H1 (cell line): ENCODE measurements at regions of chr17 and their contacts with region 1.

Region 1: DNA sequence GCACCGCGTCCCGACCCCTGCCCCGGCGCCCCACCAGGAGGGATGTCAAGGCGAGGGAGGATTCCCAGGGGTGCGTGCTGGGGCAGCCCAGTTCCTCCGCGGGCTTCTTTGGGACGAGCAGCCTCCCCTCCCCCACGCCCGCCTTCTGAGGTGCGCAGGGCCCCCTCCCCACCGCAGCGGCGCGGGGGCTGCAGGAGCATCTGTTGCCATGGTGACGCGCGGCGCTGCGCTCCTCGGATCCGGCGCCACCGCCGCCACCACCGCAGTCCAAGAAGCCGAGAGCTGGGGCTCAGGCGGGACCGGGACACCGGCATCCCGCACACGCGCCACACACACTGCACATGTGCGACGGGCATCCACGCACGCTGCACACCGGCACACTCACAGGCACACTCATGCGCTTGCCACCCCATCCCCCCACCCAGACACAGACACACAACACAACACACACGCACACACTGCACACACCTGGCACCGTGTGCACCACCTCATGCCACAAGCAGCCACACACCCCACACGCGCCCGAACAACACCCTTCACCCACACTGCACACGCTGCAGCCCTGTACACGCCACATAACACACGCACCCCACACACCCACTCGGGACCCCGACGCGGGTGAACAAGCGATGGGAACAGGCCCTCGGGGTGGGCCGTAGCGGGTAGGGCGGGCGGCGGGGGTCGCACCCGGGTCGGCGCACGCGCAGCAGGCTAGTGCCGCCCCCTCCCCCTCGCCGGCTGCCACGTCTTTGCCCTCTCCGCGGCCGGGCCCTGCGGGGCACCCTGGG is 17.0 kb downstream of the ENPP7 start:
- DNase-seq: no peak
- H3K4me3 ChIP-seq: peak overlapping the region; percentile 17 to 62 (median 36)
- H3K27ac ChIP-seq: no peak overlapping the region
- H3K4me1 ChIP-seq: peaks cover 4 to 24% (median 15%) of the 10 kb centered on the region in 4 experiments
- H3K27me3 ChIP-seq: peaks cover 19 to 47% (median 35%) of the 10 kb centered on the region in 4 experiments
- CTCF ChIP-seq: no peak
- EP300 ChIP-seq: no peak
- POLR2A ChIP-seq: no peak
- RAD21 ChIP-seq: no peak

Region 2: DNA sequence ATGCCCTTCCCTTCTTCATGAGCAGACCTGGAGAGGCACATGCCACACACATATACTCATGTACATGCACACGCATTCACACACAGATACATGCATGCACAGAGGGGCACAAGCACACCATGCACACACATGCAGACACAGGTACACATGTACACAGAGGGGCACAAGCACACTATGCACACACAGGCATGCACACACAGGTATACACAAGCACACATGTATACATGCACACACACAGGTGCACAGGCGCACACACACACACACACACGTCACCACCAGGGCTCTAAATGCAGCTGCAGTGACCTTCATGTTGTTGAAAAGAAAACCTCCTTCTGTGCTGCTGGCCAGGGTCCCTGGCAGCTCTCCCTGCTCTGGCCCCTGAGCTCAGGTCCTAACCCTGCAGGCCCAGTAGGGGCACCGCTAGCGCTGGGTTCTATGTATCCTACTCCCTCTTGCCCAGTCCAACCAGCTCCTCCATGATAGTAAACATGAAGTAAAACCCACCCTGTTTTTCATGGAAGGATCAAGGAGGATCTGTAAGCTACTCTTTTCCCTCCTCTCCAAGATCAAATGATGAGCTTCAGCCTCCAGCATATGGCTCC is 309.7 kb before region 1 on chr17:
- CTCF ChIA-PET with region 1: no interaction called
- POLR2A ChIA-PET with region 1: no interaction called
- DNase-seq: no peak
- H3K4me3 ChIP-seq: no peak overlapping the region
- H3K27ac ChIP-seq: no peak overlapping the region
- H3K4me1 ChIP-seq: no peaks in the 10 kb centered on the region; a peak in 1 of 7 replicates
- H3K27me3 ChIP-seq: no peaks in the 10 kb centered on the region
- CTCF ChIP-seq: peak in 2 of 3 experiments; percentile 27 to 36; a peak in 2 of 4 replicates
- EP300 ChIP-seq: no peak
- POLR2A ChIP-seq: no peak
- RAD21 ChIP-seq: peak; percentile 5 to 32; a peak in 2 of 4 replicates

Region 3: GRCh38 chr17:79622122-79622807 is 125.4 kb before region 1 on chr17:
- CTCF ChIA-PET with region 1: no interaction called
- POLR2A ChIA-PET with region 1: no interaction called
- DNase-seq: peak in 1 of 2 experiments; percentile 39
- H3K4me3 ChIP-seq: no peak overlapping the region
- H3K27ac ChIP-seq: no peak overlapping the region
- H3K4me1 ChIP-seq: peaks cover 0 to 10% (median 5%) of the 10 kb centered on the region in 4 experiments; a peak in 5 of 7 replicates
- H3K27me3 ChIP-seq: peaks cover 0 to 6% (median 0%) of the 10 kb centered on the region in 4 experiments; a peak in 1 of 7 replicates
- CTCF ChIP-seq: no peak
- EP300 ChIP-seq: no peak
- POLR2A ChIP-seq: no peak
- RAD21 ChIP-seq: no peak

Region 4: DNA sequence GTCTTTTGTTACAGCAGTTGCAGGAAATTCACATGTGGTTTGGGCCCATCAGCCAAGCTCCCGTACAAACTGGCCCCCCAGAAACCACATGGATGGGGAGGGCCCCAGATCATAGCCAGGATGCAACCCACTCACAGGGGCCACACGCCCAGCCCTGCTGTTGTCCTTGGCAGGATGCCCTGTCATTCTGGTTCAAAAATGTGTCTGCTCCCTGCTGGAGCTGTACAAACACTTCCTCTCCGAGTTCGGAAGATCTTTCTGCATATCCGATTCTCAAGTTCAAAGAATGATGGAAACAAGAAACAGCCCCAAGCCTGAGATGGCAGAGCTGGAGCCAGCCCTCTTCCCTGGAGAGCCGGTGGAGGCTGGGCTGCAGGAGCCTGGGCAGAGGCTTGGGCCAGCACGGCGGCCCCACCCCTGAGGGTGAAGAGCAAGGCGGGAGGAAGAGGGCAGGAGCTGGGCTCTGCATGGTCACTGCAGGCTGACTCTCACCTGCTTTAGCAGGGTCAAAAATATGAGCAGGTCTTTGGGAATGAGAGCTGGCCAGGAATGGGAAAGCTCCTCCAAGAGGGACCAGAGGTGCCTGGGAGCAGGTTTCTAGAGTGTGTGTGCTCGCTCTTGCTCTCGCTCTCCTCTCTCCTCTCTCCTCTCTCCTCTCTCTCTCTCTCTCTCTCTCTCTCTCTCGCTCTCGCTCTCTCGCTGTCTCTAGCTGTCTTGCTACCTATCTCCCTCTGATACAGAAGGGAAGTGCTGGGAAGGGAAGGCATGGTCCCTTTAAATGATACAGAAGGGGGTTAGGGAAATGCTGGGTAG is 51.7 kb before region 1 on chr17:
- CTCF ChIA-PET with region 1: no interaction called
- POLR2A ChIA-PET with region 1: no interaction called
- DNase-seq: no peak
- H3K4me3 ChIP-seq: no peak overlapping the region
- H3K27ac ChIP-seq: no peak overlapping the region
- H3K4me1 ChIP-seq: peaks cover 3 to 33% (median 20%) of the 10 kb centered on the region in 4 experiments
- H3K27me3 ChIP-seq: peaks cover 0 to 7% (median 0%) of the 10 kb centered on the region in 4 experiments; a peak in 3 of 7 replicates
- CTCF ChIP-seq: no peak
- EP300 ChIP-seq: no peak
- POLR2A ChIP-seq: no peak
- RAD21 ChIP-seq: no peak

Region 5: DNA sequence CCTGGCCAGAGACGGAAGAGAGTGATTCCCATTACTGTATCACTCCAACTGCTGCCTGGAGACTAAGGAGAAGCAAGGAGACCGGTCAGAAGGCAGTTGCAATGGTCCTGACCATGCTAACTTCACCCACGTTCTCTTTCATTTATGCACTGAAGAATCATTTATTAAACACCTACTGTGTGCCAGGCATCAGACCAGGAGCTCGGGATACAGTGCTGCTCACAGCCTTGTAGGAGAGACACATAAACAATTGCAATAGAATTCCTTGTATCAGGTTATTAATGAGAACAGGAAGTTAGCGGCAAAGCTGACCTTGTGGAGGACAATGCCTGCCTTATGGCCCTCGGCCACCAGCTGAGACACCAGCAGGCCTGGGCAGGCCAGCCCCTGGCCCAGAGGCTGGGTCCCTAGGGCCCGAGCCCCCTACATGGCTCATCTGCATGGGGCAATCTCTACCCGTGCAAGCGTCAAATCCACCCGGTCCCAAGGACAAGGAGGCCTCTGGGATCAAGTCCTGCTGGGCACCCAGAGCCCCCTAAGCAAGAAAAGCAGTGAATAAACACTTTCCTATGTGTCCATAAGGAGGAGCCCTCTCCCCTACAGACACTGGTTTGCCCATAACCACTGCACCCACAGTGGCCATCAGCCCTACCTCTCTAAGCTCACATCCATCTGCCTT is 25.6 kb before region 1 on chr17:
- CTCF ChIA-PET with region 1: interaction called, 22 read pairs
- POLR2A ChIA-PET with region 1: no interaction called
- DNase-seq: no peak
- H3K4me3 ChIP-seq: no peak overlapping the region
- H3K27ac ChIP-seq: no peak overlapping the region
- H3K4me1 ChIP-seq: peaks cover 0 to 3% (median under 1%) of the 10 kb centered on the region in 4 experiments; a peak in 1 of 7 replicates
- H3K27me3 ChIP-seq: no peaks in the 10 kb centered on the region; a peak in 1 of 7 replicates
- CTCF ChIP-seq: peak; percentile 66 to 77 (median 71)
- EP300 ChIP-seq: no peak
- POLR2A ChIP-seq: no peak
- RAD21 ChIP-seq: peak; percentile 72 to 81

Region 6: DNA sequence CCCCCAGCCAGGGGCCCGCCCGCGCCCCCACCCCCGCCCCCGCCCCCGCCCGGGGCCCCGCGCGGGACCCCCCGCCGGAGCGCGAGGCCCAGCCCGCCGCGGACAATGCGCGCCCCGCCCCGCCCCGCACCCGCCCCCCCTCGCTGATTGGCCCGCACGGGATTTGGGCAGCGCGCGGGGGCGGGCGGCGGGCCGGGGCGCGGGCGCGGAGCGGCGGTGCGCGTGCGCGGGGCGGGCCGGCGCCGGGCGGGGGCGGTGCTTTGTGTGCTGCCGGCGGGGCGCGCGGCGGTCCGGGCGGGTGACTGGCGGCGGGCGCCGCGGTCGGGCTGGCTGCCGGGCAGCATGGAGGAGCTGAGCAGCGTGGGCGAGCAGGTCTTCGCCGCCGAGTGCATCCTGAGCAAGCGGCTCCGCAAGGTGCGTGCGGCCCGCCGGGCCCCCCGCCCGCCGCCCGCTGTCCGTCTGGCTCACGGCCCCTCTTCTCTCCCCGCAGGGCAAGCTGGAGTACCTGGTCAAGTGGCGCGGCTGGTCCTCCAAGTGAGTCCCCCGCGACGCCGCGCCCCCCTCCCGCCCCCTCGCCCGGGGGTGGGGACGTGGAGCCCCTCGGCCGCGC is 30.3 kb after region 1 on chr17 and contains the start of gene CBX2:
- CTCF ChIA-PET with region 1: interaction called, 90 read pairs
- POLR2A ChIA-PET with region 1: interaction called, 77 read pairs
- DNase-seq: peak in 1 of 2 experiments; percentile 85
- H3K4me3 ChIP-seq: peak within 1 kb of the TSS; percentile 57 to 97 (median 83)
- H3K27ac ChIP-seq: peak within 1 kb of the TSS; percentile 85
- H3K4me1 ChIP-seq: peaks cover 4 to 19% (median 15%) of the 10 kb centered on the region in 4 experiments
- H3K27me3 ChIP-seq: no peaks in the 10 kb centered on the region; a peak in 1 of 7 replicates
- CTCF ChIP-seq: no peak
- EP300 ChIP-seq: no peak
- POLR2A ChIP-seq: peak; percentile 63 to 85
- RAD21 ChIP-seq: no peak
- total RNA-seq, gene CBX2: 83.9 and 85.9 TPM in 2 replicates

Region 7: GRCh38 chr17:79796763-79797491 is 49.2 kb after region 1 on chr17 and contains the start of gene CBX8:
- CTCF ChIA-PET with region 1: interaction called, 94 read pairs
- POLR2A ChIA-PET with region 1: interaction called, 7 read pairs
- DNase-seq: peak; percentile 99 to 100
- H3K4me3 ChIP-seq: peak within 1 kb of the TSS; percentile 44 to 67 (median 53)
- H3K27ac ChIP-seq: peak within 1 kb of the TSS; percentile 66; the same call in 1 of the 2 replicates
- H3K4me1 ChIP-seq: peaks cover 8 to 58% (median 38%) of the 10 kb centered on the region in 4 experiments
- H3K27me3 ChIP-seq: peaks cover 80 to 92% (median 90%) of the 10 kb centered on the region in 4 experiments
- CTCF ChIP-seq: no peak
- EP300 ChIP-seq: peak in 1 of 2 experiments; percentile 59; a peak in 1 of 3 replicates
- POLR2A ChIP-seq: peak in 1 of 2 experiments; percentile 43; a peak in 1 of 3 replicates
- RAD21 ChIP-seq: no peak
- total RNA-seq, gene CBX8: 1.5 and 2.1 TPM in 2 replicates